ENCODE measurements at regions of chr3 and their contacts with region 1.

Region 1: DNA sequence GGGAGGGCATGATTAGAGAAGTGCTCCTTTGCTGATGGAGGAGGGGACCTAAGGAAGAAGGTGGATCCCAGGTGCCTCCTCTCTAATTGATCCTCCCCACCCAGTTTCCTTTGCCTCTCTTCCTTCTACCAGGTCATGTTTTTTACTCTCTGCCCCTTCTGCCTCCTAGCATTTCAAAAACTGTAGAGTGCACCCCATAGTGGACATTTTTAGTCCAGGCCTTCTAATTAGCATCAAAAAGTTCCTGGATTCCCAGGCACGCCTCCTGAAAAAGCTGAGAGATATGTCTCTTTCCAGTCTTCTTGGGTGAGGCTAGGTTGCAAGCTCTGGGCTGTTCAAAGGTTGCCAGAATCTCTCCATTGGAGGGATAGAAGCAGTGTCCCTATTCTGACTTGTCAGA is 18.7 kb upstream of the ITGB5 start:
- DNase-seq: no peak
- H3K4me3 ChIP-seq: no peak overlapping the region
- H3K27ac ChIP-seq: no peak overlapping the region
- H3K4me1 ChIP-seq: peaks cover 0 to 9% (median 6%) of the 10 kb centered on the region in 4 donors
- H3K27me3 ChIP-seq: no peaks in the 10 kb centered on the region
- CTCF ChIP-seq: no peak
- EP300 ChIP-seq: no peak
- POLR2A ChIP-seq: no peak

Region 2: DNA sequence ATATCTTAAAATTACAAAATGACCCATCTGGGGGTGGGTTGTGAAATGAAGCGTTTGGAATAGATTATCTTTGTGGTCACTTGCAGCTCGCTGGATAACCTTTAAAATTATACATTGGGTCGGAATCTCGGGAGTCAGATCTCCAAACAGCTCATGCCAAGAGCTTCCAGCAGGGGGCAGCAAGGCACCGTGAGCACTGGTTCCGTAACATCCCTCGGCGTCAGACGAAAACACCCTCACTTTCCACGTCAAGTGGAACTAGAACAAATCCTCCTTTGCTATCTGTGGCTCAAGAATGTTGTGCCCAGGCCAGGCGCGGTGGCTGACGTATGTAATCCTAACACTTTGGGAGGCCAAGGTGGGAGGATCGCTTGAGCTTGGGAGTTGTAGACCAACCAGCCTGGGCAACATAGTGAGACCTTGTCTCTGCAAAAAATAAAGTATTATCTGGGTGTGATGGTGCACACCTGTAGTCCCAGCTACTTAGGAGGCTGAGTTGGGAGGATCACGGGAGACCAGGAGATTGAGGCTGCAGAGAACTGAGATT is 144.5 kb before region 1 on chr3:
- intact Hi-C with region 1: loop called (anchors 1 kb)
- DNase-seq: peak; percentile 98
- H3K4me3 ChIP-seq: no peak overlapping the region
- H3K27ac ChIP-seq: peak overlapping the region; percentile 64 to 70 (median 68)
- H3K4me1 ChIP-seq: peaks cover 14 to 19% (median 18%) of the 10 kb centered on the region in 4 donors
- H3K27me3 ChIP-seq: no peaks in the 10 kb centered on the region
- CTCF ChIP-seq: peak; percentile 97 to 98 (median 97)
- EP300 ChIP-seq: peak; percentile 88
- POLR2A ChIP-seq: no peak

Region 3: DNA sequence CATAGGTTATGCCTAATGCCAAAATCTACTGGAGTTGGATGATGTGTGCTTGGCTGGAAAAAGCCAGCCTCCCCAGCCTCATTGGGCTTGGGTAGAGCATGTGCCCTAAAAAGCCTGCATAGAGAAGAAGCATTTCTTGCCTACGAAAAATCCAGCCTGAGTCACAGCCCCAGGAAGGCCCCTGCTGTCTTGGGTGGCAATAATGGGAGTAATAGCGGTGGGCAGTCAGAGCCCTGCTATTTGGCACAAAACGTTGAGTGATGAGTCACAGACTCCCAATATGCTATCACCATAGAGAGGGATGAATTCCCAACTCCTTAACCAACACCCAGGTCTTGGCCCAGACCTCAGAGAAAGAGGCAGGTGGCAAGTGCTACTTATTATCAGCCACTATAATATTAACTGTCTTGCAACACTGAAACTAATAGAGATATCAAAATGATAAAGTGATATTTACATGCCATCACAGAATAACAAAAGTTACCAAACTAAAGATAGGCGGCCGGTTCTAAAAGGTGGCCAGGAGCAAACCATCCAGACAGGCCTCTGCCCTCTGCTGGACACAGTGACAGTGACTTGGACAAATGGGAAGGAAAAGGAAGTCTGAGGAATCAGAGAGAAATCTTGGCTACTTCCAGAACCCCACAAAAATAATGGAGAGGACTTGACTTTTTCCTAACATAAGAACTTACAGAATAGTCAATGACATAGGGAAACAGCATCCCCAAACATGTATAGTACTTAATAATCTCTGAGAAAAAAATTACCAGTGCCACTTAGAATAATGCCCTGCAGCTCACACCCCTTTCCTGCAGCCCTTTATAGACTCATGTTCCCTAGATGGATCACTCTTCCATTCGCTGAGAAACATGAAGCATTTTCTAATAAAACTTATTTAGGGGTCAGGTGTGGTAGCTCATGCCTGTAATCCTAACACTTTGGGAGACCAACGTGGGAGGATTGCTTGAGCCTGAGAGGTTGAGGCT is 80.6 kb after region 1 on chr3:
- intact Hi-C with region 1: no loop called
- DNase-seq: no peak
- H3K4me3 ChIP-seq: no peak overlapping the region
- H3K27ac ChIP-seq: peak overlapping the region; percentile 69 to 75 (median 71)
- H3K4me1 ChIP-seq: peaks cover 34 to 45% (median 38%) of the 10 kb centered on the region in 4 donors
- H3K27me3 ChIP-seq: no peaks in the 10 kb centered on the region
- CTCF ChIP-seq: peak in 2 of 3 experiments; percentile 38 to 41
- EP300 ChIP-seq: no peak
- POLR2A ChIP-seq: no peak

Region 4: GRCh38 chr3:125257536-125257935 is 351.7 kb after region 1 on chr3:
- intact Hi-C with region 1: no loop called
- DNase-seq: no peak
- H3K4me3 ChIP-seq: no peak overlapping the region
- H3K27ac ChIP-seq: no peak overlapping the region
- H3K4me1 ChIP-seq: no peaks in the 10 kb centered on the region
- H3K27me3 ChIP-seq: no peaks in the 10 kb centered on the region
- CTCF ChIP-seq: no peak
- EP300 ChIP-seq: no peak
- POLR2A ChIP-seq: no peak